ENCODE measurements at regions of chr10 and their contacts with region 1.

Region 1: DNA sequence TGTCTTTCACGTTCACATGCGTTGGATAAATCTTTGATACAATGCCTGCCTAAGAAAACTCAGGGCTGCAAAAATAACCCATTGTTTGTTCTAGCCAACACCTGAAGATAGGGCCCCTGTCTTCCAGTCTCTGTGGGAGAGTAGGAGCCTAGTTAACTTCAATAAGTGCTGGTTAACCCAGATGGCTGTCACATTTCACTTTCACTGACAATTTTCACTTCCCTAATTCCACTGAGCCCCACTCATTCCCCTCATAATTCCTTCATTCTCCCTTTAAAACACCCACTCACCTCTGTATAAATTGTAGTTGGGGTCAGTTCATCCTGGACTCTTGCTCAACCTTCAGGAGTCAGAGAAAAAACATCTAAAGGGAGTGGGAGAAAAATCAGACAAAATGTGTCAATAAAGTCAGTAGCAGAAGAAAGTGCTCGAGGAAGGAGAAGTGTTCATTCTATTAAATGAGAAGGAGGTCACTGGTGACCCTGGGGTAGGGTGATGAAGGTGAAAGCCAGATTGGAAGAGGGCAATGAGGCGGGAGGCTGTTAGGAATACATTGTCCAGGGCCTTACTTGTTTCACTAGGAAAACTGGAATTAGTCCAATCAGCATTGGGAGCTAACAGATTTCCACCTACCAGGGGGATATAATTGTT is 51.2 kb upstream of the ABI1 start:
- DNase-seq: no peak
- H3K27ac ChIP-seq: no peak overlapping the region
- CTCF ChIP-seq: no peak

Region 2: GRCh38 chr10:27252267-27253000 is 340.5 kb after region 1 on chr10:
- CTCF ChIA-PET with region 1: interaction called, 10 read pairs
- POLR2A ChIA-PET with region 1: no interaction called
- DNase-seq: peak; percentile 57
- H3K27ac ChIP-seq: peak overlapping the region; percentile 62
- CTCF ChIP-seq: peak; percentile 74

Measured in RWPE1 (cell line).